BJ (cell line): ENCODE measurements at regions of chr6 and their contacts with region 1.

Region 1: DNA sequence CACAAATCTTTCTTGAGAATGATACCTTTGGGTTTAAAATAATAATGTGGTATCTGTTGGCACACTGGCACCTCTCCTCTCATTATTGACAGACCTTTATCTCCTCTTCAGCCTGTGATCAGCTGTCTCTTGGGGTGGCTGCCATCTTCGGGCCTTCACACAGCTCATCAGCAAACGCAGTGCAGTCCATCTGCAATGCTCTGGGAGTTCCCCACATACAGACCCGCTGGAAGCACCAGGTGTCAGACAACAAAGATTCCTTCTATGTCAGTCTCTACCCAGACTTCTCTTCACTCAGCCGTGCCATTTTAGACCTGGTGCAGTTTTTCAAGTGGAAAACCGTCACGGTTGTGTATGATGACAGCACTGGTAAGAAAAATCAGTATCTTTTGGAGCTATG is 232.8 kb downstream of the GRIK2 start:
- DNase-seq: no peak
- H3K4me3 ChIP-seq: no peak overlapping the region
- H3K27me3 ChIP-seq: no peaks in the 10 kb centered on the region
- CTCF ChIP-seq: no peak

Region 2: GRCh38 chr6:101302593-101302992 is 323.7 kb before region 1 on chr6:
- CTCF ChIA-PET with region 1: no interaction called
- POLR2A ChIA-PET with region 1: no interaction called
- DNase-seq: no peak
- H3K4me3 ChIP-seq: no peak overlapping the region
- H3K27me3 ChIP-seq: no peaks in the 10 kb centered on the region
- CTCF ChIP-seq: no peak

Region 3: DNA sequence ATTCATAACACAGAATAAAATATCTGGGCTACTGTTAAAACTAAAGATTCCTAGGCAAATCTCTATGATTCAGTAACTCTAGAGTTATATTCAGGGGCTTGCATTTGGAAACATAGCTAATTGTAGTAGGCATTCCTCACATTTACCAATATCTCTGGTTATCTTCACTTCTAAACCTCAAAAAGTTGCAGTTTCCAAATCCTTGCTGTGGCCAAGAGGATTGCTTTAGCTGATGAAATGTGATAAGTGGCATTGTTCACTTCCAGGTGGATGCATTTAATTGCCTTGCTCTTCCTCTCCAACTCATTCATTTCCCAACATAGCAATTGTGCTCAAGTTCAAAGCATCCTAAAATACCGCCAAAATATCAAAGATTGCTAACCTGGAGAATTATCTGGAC is 13.9 kb after region 1 on chr6:
- CTCF ChIA-PET with region 1: interaction called, 10 read pairs
- POLR2A ChIA-PET with region 1: no interaction called
- DNase-seq: no peak
- H3K4me3 ChIP-seq: no peak overlapping the region
- H3K27me3 ChIP-seq: no peaks in the 10 kb centered on the region
- CTCF ChIP-seq: no peak